H1 (cell line): ENCODE measurements at regions of chr16 and their contacts with region 1.

Region 1: DNA sequence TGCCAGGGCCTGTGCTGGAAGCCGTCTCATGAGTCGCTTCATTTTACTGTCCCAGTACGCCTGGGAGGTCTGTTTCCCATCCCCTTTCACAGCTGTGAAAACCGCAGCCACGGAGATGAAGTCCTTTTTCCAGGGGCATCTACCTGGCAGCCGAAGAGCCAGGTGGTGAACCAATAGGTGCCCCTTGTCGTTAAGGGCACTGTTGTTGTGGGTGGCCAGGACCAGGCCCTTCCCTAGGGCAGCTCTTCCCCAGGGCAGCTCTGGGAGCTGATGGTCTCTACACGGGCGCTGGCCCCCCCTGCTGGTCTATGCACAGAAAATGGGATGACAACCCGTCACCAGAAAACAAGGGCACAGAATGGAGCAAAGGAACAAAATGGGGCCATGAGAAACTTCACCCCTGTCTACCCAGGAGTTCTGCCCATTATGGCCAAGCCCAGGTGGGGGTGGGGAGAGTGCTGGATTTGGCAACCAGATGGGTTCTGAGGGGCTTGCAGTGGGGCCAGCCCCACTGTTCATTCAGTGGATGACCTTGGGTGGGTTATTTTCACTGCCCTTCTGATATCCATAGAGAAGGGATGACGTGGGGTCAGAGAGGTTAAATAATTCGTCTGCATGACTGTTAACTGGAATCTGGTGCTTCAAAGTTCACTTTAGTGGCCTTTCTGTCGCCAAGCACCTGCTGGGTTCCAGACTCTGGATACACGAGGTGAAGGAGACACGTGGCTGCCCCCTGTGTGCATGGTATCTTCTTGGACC is 11.5 kb downstream of the RMI2 start:
- DNase-seq: peak; percentile 36 to 85
- H3K4me3 ChIP-seq: no peak overlapping the region
- H3K27ac ChIP-seq: no peak overlapping the region
- H3K4me1 ChIP-seq: peaks cover 0 to 2% (median 0%) of the 10 kb centered on the region in 4 experiments; a peak in 3 of 7 replicates
- H3K27me3 ChIP-seq: no peaks in the 10 kb centered on the region
- CTCF ChIP-seq: peak; percentile 70 to 82 (median 79)
- EP300 ChIP-seq: no peak
- POLR2A ChIP-seq: no peak
- RAD21 ChIP-seq: peak; percentile 90 to 94

Region 2: GRCh38 chr16:10971560-10971961 is 385.2 kb before region 1 on chr16:
- CTCF ChIA-PET with region 1: interaction called, 10 read pairs
- POLR2A ChIA-PET with region 1: no interaction called
- DNase-seq: no peak
- H3K4me3 ChIP-seq: no peak overlapping the region
- H3K27ac ChIP-seq: no peak overlapping the region
- H3K4me1 ChIP-seq: peaks cover 0 to 2% (median 0%) of the 10 kb centered on the region in 4 experiments; a peak in 2 of 7 replicates
- H3K27me3 ChIP-seq: no peaks in the 10 kb centered on the region
- CTCF ChIP-seq: peak in 2 of 3 experiments; percentile 63 to 70; a peak in 3 of 4 replicates
- EP300 ChIP-seq: no peak
- POLR2A ChIP-seq: no peak
- RAD21 ChIP-seq: peak; percentile 81 to 84

Region 3: DNA sequence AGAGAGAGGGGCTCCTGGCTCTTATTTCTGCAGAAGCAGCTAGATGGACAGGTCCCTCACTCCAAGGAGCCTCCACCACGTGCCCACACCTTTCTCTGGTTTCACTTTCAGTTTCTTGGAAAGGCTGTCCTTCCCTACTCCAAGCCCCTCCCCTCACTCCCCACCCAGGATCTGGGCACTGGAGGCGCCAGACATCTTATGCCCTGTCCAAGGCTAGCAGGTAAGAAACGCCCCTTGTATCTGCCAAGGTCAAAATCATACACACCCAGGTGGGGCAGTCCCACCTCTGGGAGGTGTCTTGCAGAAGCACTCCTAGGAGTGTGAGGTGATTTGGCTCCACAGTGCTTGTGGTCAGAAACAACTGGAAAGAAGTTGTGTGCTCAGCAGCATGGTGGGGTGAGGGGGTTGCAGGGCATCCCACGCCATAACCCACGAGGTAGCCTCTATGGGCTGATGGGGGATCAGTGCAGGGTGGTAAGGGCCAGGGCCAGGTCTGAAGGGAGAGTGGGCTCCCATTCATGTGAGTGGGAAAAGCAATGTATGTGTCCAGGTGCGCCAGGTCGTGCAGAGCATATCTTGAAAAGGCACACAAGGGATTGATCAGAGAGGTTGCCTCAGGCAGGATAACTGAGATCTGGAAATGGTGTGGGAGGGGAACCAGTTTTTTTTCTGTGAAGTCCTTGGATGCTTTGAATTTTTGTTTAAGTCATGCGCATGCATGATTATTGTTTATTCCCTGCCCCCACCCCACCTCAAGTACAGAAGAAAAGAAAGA is 43.8 kb before region 1 on chr16:
- CTCF ChIA-PET with region 1: interaction called, 12 read pairs
- POLR2A ChIA-PET with region 1: interaction called, 3 read pairs
- DNase-seq: no peak
- H3K4me3 ChIP-seq: peak overlapping the region in 1 of 4 experiments; percentile 2; a peak in 1 of 8 replicates
- H3K27ac ChIP-seq: peak overlapping the region; percentile 61; the same call in 1 of the 2 replicates
- H3K4me1 ChIP-seq: peaks cover 26 to 45% (median 26%) of the 10 kb centered on the region in 4 experiments
- H3K27me3 ChIP-seq: no peaks in the 10 kb centered on the region
- CTCF ChIP-seq: no peak
- EP300 ChIP-seq: peak in 1 of 2 experiments; percentile 6; a peak in 1 of 3 replicates
- POLR2A ChIP-seq: no peak
- RAD21 ChIP-seq: no peak

Region 4: DNA sequence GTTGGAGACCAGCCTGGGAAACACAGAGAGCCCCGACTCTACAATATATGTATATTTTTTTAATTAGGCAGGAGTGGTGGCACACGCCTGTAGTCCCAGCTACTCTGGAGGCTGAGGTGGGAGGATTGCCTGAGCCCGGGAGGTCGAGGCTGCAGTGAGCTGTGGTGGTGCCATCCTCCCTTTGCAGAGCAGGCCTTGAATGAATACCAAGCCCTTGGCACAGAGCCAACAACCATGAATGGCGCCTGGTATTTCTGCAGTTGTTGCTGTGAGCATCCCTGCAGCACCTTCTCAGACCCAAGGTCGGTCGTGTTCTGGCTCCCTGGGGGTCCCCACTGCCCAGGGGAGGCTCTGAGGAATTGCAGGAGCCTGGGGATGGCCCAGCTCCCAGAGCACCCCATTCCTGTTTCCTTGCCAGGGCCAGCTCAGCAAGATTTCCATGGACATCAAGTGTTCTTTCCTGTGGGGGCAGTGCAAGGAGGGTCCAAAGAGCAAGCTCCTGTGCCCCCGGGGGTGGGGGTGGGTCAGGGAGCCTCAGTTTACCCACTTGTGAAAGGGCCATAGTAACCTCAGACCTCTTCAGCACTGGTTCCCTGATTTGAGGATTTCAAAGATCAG is 37.1 kb before region 1 on chr16:
- CTCF ChIA-PET with region 1: interaction called, 12 read pairs
- POLR2A ChIA-PET with region 1: interaction called, 4 read pairs
- DNase-seq: no peak
- H3K4me3 ChIP-seq: no peak overlapping the region
- H3K27ac ChIP-seq: no peak overlapping the region
- H3K4me1 ChIP-seq: peaks cover 9 to 17% (median 13%) of the 10 kb centered on the region in 4 experiments
- H3K27me3 ChIP-seq: no peaks in the 10 kb centered on the region
- CTCF ChIP-seq: no peak
- EP300 ChIP-seq: no peak
- POLR2A ChIP-seq: no peak
- RAD21 ChIP-seq: no peak

Region 5: DNA sequence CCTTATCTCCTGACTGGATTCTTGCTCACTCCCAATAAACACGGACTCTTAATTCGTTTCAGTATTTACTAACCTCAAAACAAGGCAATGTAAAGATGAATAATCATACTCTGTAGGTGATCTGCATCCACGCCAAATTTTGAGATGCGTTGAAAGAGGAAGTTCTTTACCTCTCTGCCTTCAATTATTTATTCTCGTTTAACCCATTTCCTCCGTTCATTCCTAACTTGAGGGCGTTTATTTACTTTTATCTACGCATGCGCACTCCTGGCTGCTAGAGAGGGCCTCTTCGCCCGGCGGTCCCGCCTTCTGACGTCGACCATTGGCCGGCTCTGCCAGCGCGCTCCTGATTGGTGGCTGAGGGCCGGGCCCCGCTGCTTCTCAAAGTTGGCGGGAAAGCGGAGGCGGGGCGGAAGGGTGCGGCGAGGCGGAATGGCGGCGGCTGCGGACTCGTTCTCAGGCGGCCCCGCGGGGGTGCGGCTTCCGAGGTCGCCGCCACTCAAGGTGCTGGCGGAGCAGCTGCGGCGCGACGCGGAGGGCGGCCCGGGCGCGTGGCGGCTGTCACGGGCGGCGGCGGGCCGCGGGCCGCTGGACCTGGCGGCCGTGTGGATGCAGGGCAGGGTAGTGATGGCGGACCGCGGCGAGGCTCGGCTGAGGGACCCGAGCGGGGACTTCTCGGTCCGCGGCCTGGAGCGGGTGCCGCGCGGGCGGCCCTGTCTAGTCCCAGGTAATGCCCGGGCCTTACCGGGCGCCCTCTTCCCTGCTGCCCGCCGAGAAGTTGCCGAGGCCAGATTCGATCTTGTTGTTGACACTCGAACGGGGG is 11.5 kb before region 1 on chr16 and contains the start of gene RMI2:
- CTCF ChIA-PET with region 1: interaction called, 9 read pairs
- POLR2A ChIA-PET with region 1: interaction called, 23 read pairs
- DNase-seq: peak; percentile 84 to 93
- H3K4me3 ChIP-seq: peak within 1 kb of the TSS; percentile 50 to 94 (median 69)
- H3K27ac ChIP-seq: peak within 1 kb of the TSS; percentile 84; the same call in 1 of the 2 replicates
- H3K4me1 ChIP-seq: peaks cover 6 to 24% (median 14%) of the 10 kb centered on the region in 4 experiments
- H3K27me3 ChIP-seq: no peaks in the 10 kb centered on the region
- CTCF ChIP-seq: no peak
- EP300 ChIP-seq: no peak
- POLR2A ChIP-seq: peak; percentile 79 to 81
- RAD21 ChIP-seq: no peak
- total RNA-seq, gene RMI2: 96.0 and 96.9 TPM in 2 replicates

Region 6: GRCh38 chr16:11526655-11527350 is 170.1 kb after region 1 on chr16:
- CTCF ChIA-PET with region 1: no interaction called
- POLR2A ChIA-PET with region 1: no interaction called
- DNase-seq: peak in 1 of 2 experiments; percentile 63
- H3K4me3 ChIP-seq: peak overlapping the region in 3 of 4 experiments; percentile 6 to 51 (median 26); a peak in 4 of 8 replicates
- H3K27ac ChIP-seq: no peak overlapping the region
- H3K4me1 ChIP-seq: peaks cover 0 to 10% (median 3%) of the 10 kb centered on the region in 4 experiments; a peak in 4 of 7 replicates
- H3K27me3 ChIP-seq: no peaks in the 10 kb centered on the region
- CTCF ChIP-seq: peak in 1 of 3 experiments; percentile 2; a peak in 1 of 4 replicates
- EP300 ChIP-seq: no peak
- POLR2A ChIP-seq: no peak
- RAD21 ChIP-seq: no peak